ENCODE measurements at regions of chr7 and their contacts with region 1.

Region 1: DNA sequence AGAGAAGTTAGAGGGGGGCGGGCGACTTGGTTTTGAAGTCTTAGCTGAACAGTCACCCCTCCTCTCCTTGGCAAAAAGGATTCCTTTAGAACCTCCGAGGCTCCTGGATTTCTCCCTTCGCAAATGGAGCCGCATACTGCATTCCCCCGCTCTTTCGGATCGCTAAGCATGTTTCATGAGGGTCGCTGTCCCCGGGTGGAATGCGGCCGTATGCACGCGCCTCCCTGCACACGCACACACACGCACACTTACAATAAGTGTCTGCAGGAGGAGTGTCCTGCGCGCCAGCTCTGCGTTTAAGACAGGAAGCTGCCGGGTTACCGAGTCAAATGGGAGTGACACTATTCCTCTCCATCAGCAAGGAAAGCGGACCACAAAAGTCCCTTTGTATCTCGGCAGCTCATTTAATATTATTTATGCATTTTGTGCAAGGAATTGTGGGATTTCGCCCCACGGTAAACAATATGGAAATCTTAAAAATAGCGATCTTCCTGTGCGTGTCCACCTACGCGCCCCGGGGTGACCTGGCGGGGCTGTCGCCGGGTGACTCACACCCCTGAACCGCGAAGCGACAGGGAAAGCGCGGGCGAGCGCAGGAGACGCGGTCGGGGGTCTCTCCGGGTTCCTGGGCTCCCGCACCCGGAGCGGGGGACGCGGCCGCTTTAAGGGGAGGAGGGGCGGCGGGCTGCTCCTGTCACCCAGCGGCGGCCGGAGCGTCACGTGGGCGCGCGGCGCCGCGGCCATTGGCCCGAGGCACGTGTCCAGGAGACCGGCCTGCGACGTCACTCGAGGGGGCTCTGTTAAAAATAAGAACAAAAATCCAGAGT is 978 bp upstream of the EN2 start:
- DNase-seq: peak; percentile 56
- H3K4me3 Mint-ChIP-seq: peak overlapping the region; percentile 56
- H3K27ac Mint-ChIP-seq: no peak overlapping the region
- H3K4me1 Mint-ChIP-seq: peaks cover 27% of the 10 kb centered on the region
- H3K27me3 Mint-ChIP-seq: peaks cover 73% of the 10 kb centered on the region

Region 2: GRCh38 chr7:155804897-155805825 is 348.2 kb after region 1 on chr7:
- CTCF ChIA-PET with region 1: no interaction called
- POLR2A ChIA-PET with region 1: no interaction called
- intact Hi-C with region 1: loop called (anchors 5 kb)
- DNase-seq: peak; percentile 63
- H3K4me3 Mint-ChIP-seq: peak overlapping the region; percentile 32
- H3K27ac Mint-ChIP-seq: no peak overlapping the region
- H3K4me1 Mint-ChIP-seq: peaks cover 23% of the 10 kb centered on the region
- H3K27me3 Mint-ChIP-seq: peaks cover 55% of the 10 kb centered on the region

Region 3: DNA sequence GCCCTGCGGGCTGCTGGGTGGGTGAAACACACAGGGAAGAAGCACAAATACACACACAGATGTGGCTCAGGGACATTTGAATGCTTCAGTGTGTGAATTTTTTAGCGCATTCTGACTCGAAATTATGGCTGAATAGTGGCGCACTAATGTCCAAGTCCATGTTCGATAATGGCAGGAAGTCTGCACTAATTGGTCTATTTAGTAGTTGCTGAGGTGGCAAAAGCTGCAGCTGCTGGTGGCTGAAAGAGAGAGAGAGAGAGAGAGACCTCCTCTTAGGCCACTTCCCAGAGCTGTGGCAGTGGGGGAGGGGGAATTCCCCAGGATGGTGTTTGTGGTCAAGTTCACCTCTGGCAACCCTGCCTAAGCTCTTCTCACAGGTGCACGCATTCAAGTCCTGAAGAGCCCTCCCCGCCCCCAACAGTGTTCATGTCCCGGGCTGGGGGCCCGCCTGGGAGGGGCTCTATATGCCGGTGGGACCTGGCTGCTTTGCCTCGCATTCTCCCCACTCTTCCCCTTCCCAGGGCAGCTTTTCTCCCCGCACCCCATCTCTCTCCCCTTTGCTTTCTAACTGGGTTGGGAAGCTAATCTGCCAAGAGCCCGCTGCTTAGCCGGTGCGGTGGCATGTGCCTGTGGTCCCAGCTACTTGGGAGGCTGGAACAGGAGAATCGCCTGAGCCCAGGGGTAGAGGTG is 1559.5 kb after region 1 on chr7:
- CTCF ChIA-PET with region 1: no interaction called
- POLR2A ChIA-PET with region 1: no interaction called
- intact Hi-C with region 1: loop called (anchors 5 kb)
- DNase-seq: peak; percentile 78
- H3K4me3 Mint-ChIP-seq: no peak overlapping the region
- H3K27ac Mint-ChIP-seq: no peak overlapping the region
- H3K4me1 Mint-ChIP-seq: peaks cover 25% of the 10 kb centered on the region
- H3K27me3 Mint-ChIP-seq: peaks cover 72% of the 10 kb centered on the region

Measured in activated CD4-positive, alpha-beta memory T cell treated with anti-CD3 and anti-CD28 coated beads for 36 hours (primary cell).